Stomach (tissue), 19 donors: ENCODE measurements at regions of chr1 and their contacts with region 1.

Region 1: DNA sequence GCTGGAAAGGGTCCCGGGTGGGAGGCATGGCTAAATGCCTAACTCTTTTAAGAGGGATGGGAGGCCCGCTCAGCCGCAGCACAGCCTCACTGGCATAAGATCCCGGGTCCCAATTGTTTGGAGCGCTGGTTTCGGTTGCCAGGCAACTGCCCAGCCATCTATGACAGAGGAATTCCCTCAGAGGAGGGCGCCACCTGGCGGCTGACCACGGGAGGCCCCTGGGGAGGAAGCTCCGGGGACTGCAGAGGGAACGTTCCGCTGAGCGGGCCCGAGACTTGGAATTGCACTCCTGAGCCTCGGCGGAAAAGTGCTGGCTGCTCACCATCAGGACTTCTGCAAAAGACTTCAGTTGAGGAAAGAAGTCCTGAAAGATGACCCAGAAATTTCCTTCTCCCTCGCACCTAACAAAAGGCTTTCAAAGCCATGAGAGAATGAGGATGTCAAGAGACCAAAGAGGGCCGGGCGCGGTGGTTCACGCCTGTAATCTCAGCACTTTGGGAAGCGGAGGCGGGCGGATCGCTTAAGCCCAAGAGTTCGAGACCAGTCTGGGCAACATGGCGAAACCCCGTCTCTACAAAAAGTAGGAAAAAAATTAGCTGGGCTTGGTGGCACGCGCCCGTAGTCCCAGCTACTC is 1.1 kb upstream of the ELAPOR1 start:
- DNase-seq: peak; percentile 95 to 96
- H3K4me3 ChIP-seq: peak overlapping the region; percentile 49 to 72 (median 52)
- H3K27ac ChIP-seq: peak overlapping the region in 2 of 5 donors; percentile 33 to 76
- H3K4me1 ChIP-seq: peaks cover 18 to 38% (median 26%) of the 10 kb centered on the region in 4 donors
- H3K27me3 ChIP-seq: peaks cover 6 to 36% (median 7%) of the 10 kb centered on the region in 3 donors
- CTCF ChIP-seq: peak in 6 of 7 experiments; percentile 30 to 98 (median 91)
- EP300 ChIP-seq: no peak
- POLR2A ChIP-seq: no peak

Region 2: DNA sequence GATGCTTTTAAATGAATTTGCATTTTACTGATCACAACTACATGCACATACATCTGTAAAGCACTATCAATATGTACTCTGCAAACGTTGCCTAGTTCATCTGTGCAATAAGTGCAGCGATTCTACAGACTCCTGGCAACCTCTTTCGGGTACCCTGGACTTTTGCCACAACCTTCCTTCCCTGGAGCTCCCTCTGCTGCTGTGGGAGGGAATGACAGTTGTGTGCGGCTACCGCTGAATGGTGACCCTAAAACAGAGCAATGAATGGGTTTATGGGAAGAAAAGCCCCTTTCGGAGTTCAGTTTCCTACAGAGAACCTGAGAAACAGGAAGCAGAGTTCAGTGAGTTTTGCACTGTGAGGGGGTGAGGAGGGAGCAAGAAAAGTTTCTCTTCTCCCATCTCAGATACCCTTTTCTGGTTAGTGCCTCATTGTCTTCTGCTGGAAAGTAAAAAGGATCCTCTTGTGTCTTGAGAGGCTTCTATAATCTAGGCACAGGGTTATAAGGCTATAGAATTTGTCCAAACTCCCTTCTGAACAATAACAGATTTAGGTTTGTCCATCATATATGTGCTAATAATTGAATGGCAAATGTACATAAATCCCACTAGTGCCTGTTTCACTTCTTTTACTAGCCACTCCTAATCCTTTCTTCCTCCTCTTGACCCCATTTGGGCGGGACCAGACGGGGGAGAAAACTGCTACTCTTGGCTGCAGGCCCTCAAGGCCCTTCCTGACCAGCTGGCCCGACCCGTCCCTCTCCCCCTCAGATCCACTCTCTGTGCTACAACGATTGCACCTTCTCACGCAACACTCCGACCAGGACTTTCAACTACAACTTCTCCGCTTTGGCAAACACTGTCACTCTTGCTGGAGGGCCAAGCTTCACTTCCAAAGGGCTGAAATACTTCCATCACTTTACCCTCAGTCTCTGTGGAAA is 81.2 kb after region 1 on chr1:
- intact Hi-C with region 1: loop called (anchors 10 kb)
- DNase-seq: peak; percentile 64 to 79
- H3K4me3 ChIP-seq: no peak overlapping the region
- H3K27ac ChIP-seq: no peak overlapping the region
- H3K4me1 ChIP-seq: peaks cover 0 to 16% (median 9%) of the 10 kb centered on the region in 4 donors
- H3K27me3 ChIP-seq: no peaks in the 10 kb centered on the region
- CTCF ChIP-seq: peak in 5 of 7 experiments; percentile 50 to 81 (median 68)
- EP300 ChIP-seq: no peak
- POLR2A ChIP-seq: no peak